Activated B cell treated with CpG ODN at 0.5 μM for 24 hours (primary cell): ENCODE measurements at regions of chr12 and their contacts with region 1.

Region 1: GRCh38 chr12:108562348-108563135 is at the start of gene ISCU:
- DNase-seq: peak; percentile 100
- ATAC-seq: peak; percentile 71
- H3K4me3 Mint-ChIP-seq: peak within 1 kb of the TSS; percentile 100
- H3K27ac Mint-ChIP-seq: peak within 1 kb of the TSS; percentile 99
- H3K4me1 Mint-ChIP-seq: peaks cover 73% of the 10 kb centered on the region
- H3K27me3 Mint-ChIP-seq: no peaks in the 10 kb centered on the region
- CTCF ChIP-seq: no peak
- total RNA-seq, gene ISCU: 114 and 117 TPM in 2 replicates

Region 2: GRCh38 chr12:107736914-107737313 is 825.6 kb before region 1 on chr12:
- CTCF ChIA-PET with region 1: no interaction called
- POLR2A ChIA-PET with region 1: no interaction called
- intact Hi-C with region 1: loop called (anchors 1 kb)
- DNase-seq: peak; percentile 53
- ATAC-seq: peak; percentile 99
- H3K4me3 Mint-ChIP-seq: peak overlapping the region; percentile 53
- H3K27ac Mint-ChIP-seq: peak overlapping the region; percentile 93
- H3K4me1 Mint-ChIP-seq: peaks cover 72% of the 10 kb centered on the region
- H3K27me3 Mint-ChIP-seq: no peaks in the 10 kb centered on the region
- CTCF ChIP-seq: no peak

Region 3: DNA sequence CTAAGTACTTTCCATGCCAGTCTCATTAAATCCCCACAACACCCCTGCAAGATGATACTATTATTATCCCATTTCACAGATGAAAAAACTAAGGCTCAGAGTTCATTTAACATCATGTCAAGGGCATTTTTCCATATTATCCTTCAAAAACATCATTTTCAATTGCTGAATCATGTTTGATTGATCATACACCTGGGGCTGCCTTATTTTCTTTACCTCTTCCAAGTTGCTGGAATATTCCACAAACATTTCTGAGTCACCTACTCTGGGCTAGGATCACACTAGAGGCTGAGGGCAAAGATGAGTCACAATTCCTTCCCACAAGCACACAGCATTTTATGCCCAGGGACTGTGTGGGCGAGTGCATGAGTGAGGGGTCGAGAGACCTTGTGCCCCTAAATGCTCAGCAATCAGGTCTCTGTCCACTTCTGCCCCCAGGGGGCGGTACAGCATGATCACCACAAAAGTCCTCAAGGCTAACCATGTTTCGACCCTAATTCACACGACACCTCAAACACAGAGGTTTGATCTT is 49.4 kb after region 1 on chr12:
- CTCF ChIA-PET with region 1: interaction called, 338 read pairs
- POLR2A ChIA-PET with region 1: interaction called, 158 read pairs
- intact Hi-C with region 1: no loop called
- DNase-seq: no peak
- ATAC-seq: peak; percentile 21
- H3K4me3 Mint-ChIP-seq: no peak overlapping the region
- H3K27ac Mint-ChIP-seq: peak overlapping the region; percentile 24
- H3K4me1 Mint-ChIP-seq: peaks cover 52% of the 10 kb centered on the region
- H3K27me3 Mint-ChIP-seq: peaks cover 8% of the 10 kb centered on the region
- CTCF ChIP-seq: no peak

Region 4: GRCh38 chr12:108691175-108691997 is 128.8 kb after region 1 on chr12:
- CTCF ChIA-PET with region 1: no interaction called
- POLR2A ChIA-PET with region 1: interaction called, 8 read pairs
- intact Hi-C with region 1: loop called (anchors 1 kb)
- DNase-seq: peak; percentile 28
- ATAC-seq: peak; percentile 84
- H3K4me3 Mint-ChIP-seq: peak overlapping the region; percentile 77
- H3K27ac Mint-ChIP-seq: peak overlapping the region; percentile 89
- H3K4me1 Mint-ChIP-seq: peaks cover 54% of the 10 kb centered on the region
- H3K27me3 Mint-ChIP-seq: no peaks in the 10 kb centered on the region
- CTCF ChIP-seq: no peak

Region 5: DNA sequence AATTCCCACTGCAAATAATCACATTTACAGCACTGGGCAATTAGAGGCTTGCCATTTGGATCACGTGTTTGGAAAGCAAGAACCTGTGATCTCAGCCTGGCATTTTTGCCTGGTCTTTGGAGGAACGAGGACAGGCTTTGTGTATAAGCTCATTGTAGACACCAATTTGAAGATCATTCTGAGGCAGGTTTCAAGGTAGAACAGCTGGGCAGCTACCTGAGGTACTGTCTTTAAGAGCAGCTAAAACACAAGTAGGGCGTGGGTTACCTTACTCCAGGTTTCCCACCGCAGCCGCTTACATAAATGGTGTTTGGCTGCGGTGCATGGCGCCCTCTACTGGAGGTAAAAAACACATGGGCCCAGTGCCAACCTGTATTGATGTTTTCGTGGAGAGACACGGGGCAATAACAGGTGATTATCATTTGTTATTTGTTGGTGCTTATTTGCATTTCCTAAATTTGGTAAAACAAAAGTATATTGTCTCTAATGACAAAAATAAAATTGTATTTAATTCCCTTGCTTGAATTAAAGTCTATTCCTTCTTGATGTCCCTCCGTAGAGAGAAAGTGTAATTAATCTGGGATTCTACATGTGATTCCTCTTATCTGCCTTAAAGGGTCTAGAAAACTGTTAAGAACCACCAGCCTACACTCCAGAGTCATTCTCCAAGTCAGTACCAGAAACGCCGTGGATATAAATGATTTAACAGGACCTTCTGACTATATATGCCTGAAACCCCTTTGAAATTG is 388.6 kb after region 1 on chr12:
- CTCF ChIA-PET with region 1: interaction called, 7 read pairs
- POLR2A ChIA-PET with region 1: no interaction called
- intact Hi-C with region 1: loop called (anchors 1 kb)
- DNase-seq: peak; percentile 46
- ATAC-seq: peak; percentile 82
- H3K4me3 Mint-ChIP-seq: no peak overlapping the region
- H3K27ac Mint-ChIP-seq: no peak overlapping the region
- H3K4me1 Mint-ChIP-seq: peaks cover 7% of the 10 kb centered on the region
- H3K27me3 Mint-ChIP-seq: peaks cover 8% of the 10 kb centered on the region
- CTCF ChIP-seq: peak; percentile 97

Region 6: GRCh38 chr12:109573029-109573913 is 1010.7 kb after region 1 on chr12 and contains the starts of genes MMAB and MVK:
- CTCF ChIA-PET with region 1: no interaction called
- POLR2A ChIA-PET with region 1: no interaction called
- intact Hi-C with region 1: loop called (anchors 10 kb)
- DNase-seq: peak; percentile 92
- ATAC-seq: peak; percentile 94
- H3K4me3 Mint-ChIP-seq: peak within 1 kb of the TSS; percentile 93
- H3K27ac Mint-ChIP-seq: peak within 1 kb of the TSS; percentile 90
- H3K4me1 Mint-ChIP-seq: peaks cover 25% of the 10 kb centered on the region
- H3K27me3 Mint-ChIP-seq: no peaks in the 10 kb centered on the region
- CTCF ChIP-seq: no peak
- total RNA-seq, gene MMAB: 62.8 and 63.3 TPM in 2 replicates
- total RNA-seq, gene MVK: 28.5 and 30.3 TPM in 2 replicates